ENCODE measurements at regions of chr5 and their contacts with region 1.

Region 1: GRCh38 chr5:74640450-74640953 is at the start of gene ENC1:
- DNase-seq: peak; percentile 93
- H3K4me3 ChIP-seq: peak within 1 kb of the TSS; percentile 68
- H3K27ac ChIP-seq: peak within 1 kb of the TSS; percentile 62
- H3K4me1 ChIP-seq: peaks cover 28% of the 10 kb centered on the region
- H3K27me3 ChIP-seq: no peaks in the 10 kb centered on the region
- CTCF ChIP-seq: peak; percentile 53
- total RNA-seq, gene ENC1: 6.3 and 7.9 TPM in 2 replicates

Region 2: DNA sequence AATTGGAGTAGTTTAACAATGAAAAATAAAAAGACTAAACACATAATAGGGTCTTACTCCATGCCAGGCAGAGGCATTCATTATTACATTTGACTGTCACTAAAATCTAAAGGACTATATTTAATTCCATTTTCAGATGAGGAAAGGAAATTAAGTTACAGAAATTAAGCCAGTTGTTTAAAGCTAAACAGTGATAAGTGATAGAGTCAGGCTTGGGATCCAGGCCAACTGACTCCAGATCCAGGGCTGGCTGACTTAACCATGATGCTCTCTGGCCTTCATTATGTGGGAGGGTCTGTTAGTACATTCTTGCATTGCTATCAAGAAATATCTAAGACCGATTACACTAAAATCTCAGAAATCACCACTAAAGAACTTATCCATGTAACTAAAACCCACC is 907.3 kb before region 1 on chr5:
- CTCF ChIA-PET with region 1: no interaction called
- POLR2A ChIA-PET with region 1: no interaction called
- intact Hi-C with region 1: no loop called
- DNase-seq: no peak
- H3K4me3 ChIP-seq: no peak overlapping the region
- H3K27ac ChIP-seq: no peak overlapping the region
- H3K4me1 ChIP-seq: no peaks in the 10 kb centered on the region
- H3K27me3 ChIP-seq: no peaks in the 10 kb centered on the region
- CTCF ChIP-seq: no peak

Region 3: GRCh38 chr5:73792687-73793320 is 847.7 kb before region 1 on chr5:
- CTCF ChIA-PET with region 1: no interaction called
- POLR2A ChIA-PET with region 1: no interaction called
- intact Hi-C with region 1: loop called (anchors 5 kb)
- DNase-seq: peak; percentile 75
- H3K4me3 ChIP-seq: no peak overlapping the region
- H3K27ac ChIP-seq: no peak overlapping the region
- H3K4me1 ChIP-seq: peaks cover 20% of the 10 kb centered on the region
- H3K27me3 ChIP-seq: peaks cover 5% of the 10 kb centered on the region
- CTCF ChIP-seq: peak; percentile 93

Region 4: DNA sequence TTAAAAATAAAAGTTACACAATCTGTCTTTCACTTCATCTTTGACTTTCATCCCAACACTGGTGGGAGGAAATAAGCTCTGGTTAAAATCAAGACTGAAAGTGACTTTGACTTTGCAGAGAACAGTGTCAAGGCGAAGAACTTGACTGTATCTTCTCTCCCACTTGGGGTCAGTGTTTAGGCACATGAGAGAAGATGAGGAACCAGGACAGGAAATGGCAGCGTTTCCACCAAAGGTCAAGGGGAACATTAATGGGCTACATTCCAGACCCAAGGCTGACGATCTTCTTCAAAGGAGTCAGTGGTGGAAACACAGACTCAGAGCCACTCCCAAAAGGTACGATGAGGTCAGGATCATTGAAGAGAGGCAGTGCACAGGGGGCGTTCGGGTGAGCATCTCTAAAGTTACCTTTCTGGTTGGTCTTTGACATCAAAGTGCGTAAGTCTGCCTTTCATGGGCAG is 605.0 kb before region 1 on chr5:
- CTCF ChIA-PET with region 1: no interaction called
- POLR2A ChIA-PET with region 1: no interaction called
- intact Hi-C with region 1: loop called (anchors 5 kb)
- DNase-seq: peak; percentile 29
- H3K4me3 ChIP-seq: no peak overlapping the region
- H3K27ac ChIP-seq: no peak overlapping the region
- H3K4me1 ChIP-seq: no peaks in the 10 kb centered on the region
- H3K27me3 ChIP-seq: peaks cover 100% of the 10 kb centered on the region
- CTCF ChIP-seq: peak; percentile 37

Region 5: DNA sequence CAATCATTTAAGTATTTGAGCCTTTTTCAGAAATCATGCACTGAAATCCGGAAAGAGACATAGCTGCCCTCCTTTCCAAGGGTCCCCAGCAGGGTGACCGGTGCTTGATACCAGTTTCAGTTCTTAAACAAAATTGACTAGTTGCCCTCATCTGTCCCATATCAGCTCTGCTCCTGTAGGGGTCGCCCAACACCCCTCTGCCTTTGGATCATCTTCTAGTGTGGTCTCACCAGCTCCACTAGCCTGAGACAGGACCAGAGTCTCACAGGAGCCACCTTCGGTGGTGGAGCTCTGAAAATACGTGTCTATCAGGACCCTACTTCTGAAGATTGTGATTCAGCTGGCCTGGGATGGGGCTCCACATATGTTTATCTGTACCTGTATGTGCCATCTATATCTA is 428.2 kb before region 1 on chr5:
- CTCF ChIA-PET with region 1: interaction called, 3 read pairs
- POLR2A ChIA-PET with region 1: no interaction called
- intact Hi-C with region 1: loop called (anchors 2 kb)
- DNase-seq: peak; percentile 56
- H3K4me3 ChIP-seq: no peak overlapping the region
- H3K27ac ChIP-seq: no peak overlapping the region
- H3K4me1 ChIP-seq: no peaks in the 10 kb centered on the region
- H3K27me3 ChIP-seq: peaks cover 3% of the 10 kb centered on the region
- CTCF ChIP-seq: peak; percentile 68

Region 6: GRCh38 chr5:74394916-74395781 is 245.4 kb before region 1 on chr5:
- CTCF ChIA-PET with region 1: no interaction called
- POLR2A ChIA-PET with region 1: no interaction called
- intact Hi-C with region 1: loop called (anchors 5 kb)
- DNase-seq: no peak
- H3K4me3 ChIP-seq: no peak overlapping the region
- H3K27ac ChIP-seq: no peak overlapping the region
- H3K4me1 ChIP-seq: no peaks in the 10 kb centered on the region
- H3K27me3 ChIP-seq: no peaks in the 10 kb centered on the region
- CTCF ChIP-seq: no peak; the same call in 1 of the 2 replicates

Region 7: GRCh38 chr5:74543156-74543995 is 97.1 kb before region 1 on chr5:
- CTCF ChIA-PET with region 1: no interaction called
- POLR2A ChIA-PET with region 1: no interaction called
- intact Hi-C with region 1: loop called (anchors 1 kb)
- DNase-seq: peak; percentile 99
- H3K4me3 ChIP-seq: peak overlapping the region; percentile 8
- H3K27ac ChIP-seq: peak overlapping the region; percentile 38
- H3K4me1 ChIP-seq: peaks cover 45% of the 10 kb centered on the region
- H3K27me3 ChIP-seq: no peaks in the 10 kb centered on the region
- CTCF ChIP-seq: no peak